Natural killer cell (primary cell): ENCODE measurements at regions of chr7 and their contacts with region 1.

Region 1: GRCh38 chr7:21352540-21353387 is 75.1 kb upstream of the SP4 start:
- DNase-seq: peak in 1 of 2 donors; percentile 69
- ATAC-seq: peak; percentile 68 to 82 (median 69)
- H3K4me3 ChIP-seq: no peak overlapping the region
- H3K4me3 Mint-ChIP-seq: peak overlapping the region; percentile 84
- H3K27ac ChIP-seq: peak overlapping the region; percentile 73
- H3K27ac Mint-ChIP-seq: peak overlapping the region; percentile 82 to 88
- H3K4me1 ChIP-seq: peaks cover 35% of the 10 kb centered on the region
- H3K4me1 Mint-ChIP-seq: peaks cover 52 to 59% of the 10 kb centered on the region in 2 donors
- H3K27me3 ChIP-seq: no peaks in the 10 kb centered on the region
- H3K27me3 Mint-ChIP-seq: no peaks in the 10 kb centered on the region
- CTCF ChIP-seq: no peak

Region 2: DNA sequence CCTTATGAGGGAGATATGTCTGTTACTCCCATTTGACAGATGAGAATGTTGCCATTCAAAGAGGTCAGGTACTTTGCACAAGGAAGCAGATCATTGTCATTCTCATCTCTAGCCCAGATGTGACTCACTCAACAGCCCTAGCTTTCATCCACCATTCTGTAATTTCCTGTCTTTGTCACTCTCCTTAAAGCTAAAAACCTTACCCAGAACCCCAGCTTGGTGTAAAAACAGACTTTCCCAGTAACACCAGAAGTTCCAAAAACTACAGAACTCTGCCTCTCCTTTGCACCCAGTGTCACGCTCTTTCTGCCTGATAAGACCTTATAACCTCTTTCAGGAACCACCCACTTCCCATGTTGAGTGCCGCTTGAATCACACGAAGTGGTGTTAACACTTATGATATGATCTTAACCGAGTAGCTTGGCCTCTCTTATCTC is 14.0 kb before region 1 on chr7:
- intact Hi-C with region 1: loop called (anchors 1 kb)
- DNase-seq: peak; percentile 27 to 65
- ATAC-seq: peak; percentile 88 to 97 (median 96)
- H3K4me3 ChIP-seq: no peak overlapping the region
- H3K4me3 Mint-ChIP-seq: peak overlapping the region; percentile 72
- H3K27ac ChIP-seq: peak overlapping the region; percentile 65
- H3K27ac Mint-ChIP-seq: peak overlapping the region; percentile 88 to 94
- H3K4me1 ChIP-seq: peaks cover 12% of the 10 kb centered on the region
- H3K4me1 Mint-ChIP-seq: peaks cover 60 to 66% of the 10 kb centered on the region in 2 donors
- H3K27me3 ChIP-seq: no peaks in the 10 kb centered on the region
- H3K27me3 Mint-ChIP-seq: no peaks in the 10 kb centered on the region
- CTCF ChIP-seq: no peak

Region 3: DNA sequence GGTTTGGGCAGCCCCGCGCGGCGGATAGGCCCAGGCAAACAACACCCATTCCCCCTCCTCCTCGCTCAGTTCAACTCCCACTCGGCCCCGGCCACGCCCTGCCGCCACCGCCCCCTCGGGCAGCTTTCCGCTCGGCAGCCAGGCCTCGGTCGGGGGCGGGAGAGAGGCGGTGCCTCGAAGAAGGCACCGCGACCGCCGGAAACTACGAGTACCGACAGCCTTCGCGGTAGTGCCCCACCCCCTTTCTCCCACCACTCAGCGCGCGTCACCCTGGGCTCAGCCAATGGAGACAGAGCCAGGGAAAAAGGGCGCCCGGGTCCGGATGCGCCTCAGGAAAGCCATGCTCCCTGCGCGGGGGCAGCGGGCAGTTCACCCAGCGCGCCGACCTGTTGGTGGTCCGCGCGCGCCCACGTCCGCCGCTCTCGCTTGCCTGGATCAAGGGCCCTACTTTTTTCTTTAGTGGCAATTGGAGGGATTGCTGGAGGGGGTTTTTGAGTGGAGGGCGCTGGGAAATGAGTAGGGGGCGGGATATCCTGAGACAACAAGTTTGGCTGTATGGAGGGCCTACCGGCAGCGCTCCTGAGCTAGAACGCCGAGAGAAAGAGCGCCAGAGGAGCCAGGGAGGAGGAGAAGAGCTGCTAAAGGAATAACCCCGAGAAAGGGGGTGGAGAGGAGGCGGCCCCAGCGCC is 74.6 kb after region 1 on chr7:
- intact Hi-C with region 1: loop called (anchors 5 kb)
- DNase-seq: peak; percentile 98 to 99
- ATAC-seq: peak; percentile 75 to 90 (median 77)
- H3K4me3 ChIP-seq: peak overlapping the region; percentile 92
- H3K4me3 Mint-ChIP-seq: peak overlapping the region; percentile 99
- H3K27ac ChIP-seq: peak overlapping the region; percentile 91
- H3K27ac Mint-ChIP-seq: peak overlapping the region; percentile 99 to 100
- H3K4me1 ChIP-seq: peaks cover 27% of the 10 kb centered on the region
- H3K4me1 Mint-ChIP-seq: peaks cover 45 to 49% of the 10 kb centered on the region in 2 donors
- H3K27me3 ChIP-seq: no peaks in the 10 kb centered on the region
- H3K27me3 Mint-ChIP-seq: no peaks in the 10 kb centered on the region
- CTCF ChIP-seq: no peak

Region 4: GRCh38 chr7:21580073-21580521 is 227.3 kb after region 1 on chr7:
- intact Hi-C with region 1: no loop called
- DNase-seq: no peak
- ATAC-seq: no peak
- H3K4me3 ChIP-seq: no peak overlapping the region
- H3K4me3 Mint-ChIP-seq: no peak overlapping the region
- H3K27ac ChIP-seq: no peak overlapping the region
- H3K27ac Mint-ChIP-seq: no peak overlapping the region
- H3K4me1 ChIP-seq: no peaks in the 10 kb centered on the region
- H3K4me1 Mint-ChIP-seq: no peaks in the 10 kb centered on the region
- H3K27me3 ChIP-seq: no peaks in the 10 kb centered on the region
- H3K27me3 Mint-ChIP-seq: peaks cover 11 to 42% of the 10 kb centered on the region in 2 donors
- CTCF ChIP-seq: no peak